OCI-LY7 (cell line): ENCODE measurements at regions of chrX and their contacts with region 1.

Region 1: GRCh38 chrX:154840856-154841255 is 6.4 kb upstream of the SMIM9 start:
- DNase-seq: peak; percentile 39
- H3K4me3 ChIP-seq: no peak overlapping the region
- H3K27ac ChIP-seq: no peak overlapping the region
- H3K4me1 ChIP-seq: no peaks in the 10 kb centered on the region
- CTCF ChIP-seq: peak; percentile 76

Region 2: DNA sequence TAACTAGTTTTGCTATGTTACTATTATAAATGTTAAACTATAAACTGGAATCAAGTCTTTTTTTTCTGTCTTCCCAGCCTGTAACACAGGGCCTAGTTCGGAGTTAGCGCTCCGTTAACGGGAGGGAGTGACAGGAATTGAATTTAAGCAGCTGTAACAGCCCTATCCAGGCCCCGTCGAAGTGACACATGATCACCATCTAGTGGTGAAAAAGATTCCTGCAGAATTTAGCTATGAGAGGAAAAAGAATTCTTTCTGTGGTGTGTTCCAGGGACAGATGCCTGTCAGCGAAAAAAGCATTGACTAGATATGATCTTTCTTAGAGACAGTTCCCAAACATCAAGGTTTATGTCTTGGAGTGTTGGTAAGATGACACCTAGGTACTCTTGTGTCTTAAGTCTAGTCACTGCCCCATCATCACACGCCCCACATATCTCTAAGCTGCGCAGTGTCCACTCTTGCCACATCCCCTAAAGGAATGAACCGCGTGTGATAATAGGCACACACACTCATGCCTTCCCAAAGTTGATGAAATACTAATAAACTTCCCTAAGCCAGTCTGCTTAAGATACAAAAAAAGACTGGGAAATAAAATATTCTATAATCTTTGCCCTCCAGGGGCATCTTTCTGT is 92.0 kb before region 1 on chrX:
- CTCF ChIA-PET with region 1: no interaction called
- POLR2A ChIA-PET with region 1: interaction called, 3 read pairs
- intact Hi-C with region 1: loop called (anchors 5 kb)
- DNase-seq: peak; percentile 38
- H3K4me3 ChIP-seq: no peak overlapping the region
- H3K27ac ChIP-seq: no peak overlapping the region
- H3K4me1 ChIP-seq: peaks cover 3% of the 10 kb centered on the region
- CTCF ChIP-seq: peak; percentile 77

Region 3: DNA sequence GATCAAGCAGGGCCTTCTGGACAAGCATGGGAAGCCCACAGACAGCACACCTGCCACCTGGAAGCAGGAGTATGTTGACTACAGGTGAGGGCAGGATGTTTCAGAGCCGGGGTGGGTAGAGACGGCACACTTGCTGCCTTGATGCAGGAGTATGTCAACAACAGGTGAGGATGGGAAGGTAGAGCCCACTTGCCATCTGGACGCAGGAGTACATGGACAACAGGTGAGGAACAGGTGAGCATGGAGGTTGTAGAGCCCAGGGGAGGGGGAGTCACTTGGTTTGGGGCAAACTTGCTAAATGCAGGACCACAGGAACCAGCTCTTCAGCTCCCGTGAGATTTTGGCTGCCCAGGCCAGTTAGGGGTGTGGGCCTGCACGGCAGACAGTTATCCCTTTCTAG is 66.2 kb before region 1 on chrX:
- CTCF ChIA-PET with region 1: no interaction called
- POLR2A ChIA-PET with region 1: no interaction called
- intact Hi-C with region 1: no loop called
- DNase-seq: no peak
- H3K4me3 ChIP-seq: no peak overlapping the region
- H3K27ac ChIP-seq: no peak overlapping the region
- H3K4me1 ChIP-seq: no peaks in the 10 kb centered on the region
- CTCF ChIP-seq: no peak